ENCODE measurements at regions of chr17 and their contacts with region 1.

Region 1: GRCh38 chr17:32877164-32877764 is 340 bp upstream of the MYO1D start:
- DNase-seq: peak; percentile 92
- H3K4me3 Mint-ChIP-seq: peak overlapping the region; percentile 54
- H3K27ac Mint-ChIP-seq: peak overlapping the region; percentile 48
- H3K4me1 Mint-ChIP-seq: peaks cover 15% of the 10 kb centered on the region
- H3K27me3 Mint-ChIP-seq: no peaks in the 10 kb centered on the region

Region 2: GRCh38 chr17:32341857-32342602 is 535.2 kb before region 1 on chr17 and contains the start of gene C17orf75:
- CTCF ChIA-PET with region 1: no interaction called
- intact Hi-C with region 1: loop called (anchors 1 kb)
- DNase-seq: peak; percentile 88
- H3K4me3 Mint-ChIP-seq: peak within 1 kb of the TSS; percentile 86
- H3K27ac Mint-ChIP-seq: peak within 1 kb of the TSS; percentile 90
- H3K4me1 Mint-ChIP-seq: peaks cover 20% of the 10 kb centered on the region
- H3K27me3 Mint-ChIP-seq: no peaks in the 10 kb centered on the region
- total RNA-seq, gene C17orf75: 25.3 to 26.6 TPM

Region 3: DNA sequence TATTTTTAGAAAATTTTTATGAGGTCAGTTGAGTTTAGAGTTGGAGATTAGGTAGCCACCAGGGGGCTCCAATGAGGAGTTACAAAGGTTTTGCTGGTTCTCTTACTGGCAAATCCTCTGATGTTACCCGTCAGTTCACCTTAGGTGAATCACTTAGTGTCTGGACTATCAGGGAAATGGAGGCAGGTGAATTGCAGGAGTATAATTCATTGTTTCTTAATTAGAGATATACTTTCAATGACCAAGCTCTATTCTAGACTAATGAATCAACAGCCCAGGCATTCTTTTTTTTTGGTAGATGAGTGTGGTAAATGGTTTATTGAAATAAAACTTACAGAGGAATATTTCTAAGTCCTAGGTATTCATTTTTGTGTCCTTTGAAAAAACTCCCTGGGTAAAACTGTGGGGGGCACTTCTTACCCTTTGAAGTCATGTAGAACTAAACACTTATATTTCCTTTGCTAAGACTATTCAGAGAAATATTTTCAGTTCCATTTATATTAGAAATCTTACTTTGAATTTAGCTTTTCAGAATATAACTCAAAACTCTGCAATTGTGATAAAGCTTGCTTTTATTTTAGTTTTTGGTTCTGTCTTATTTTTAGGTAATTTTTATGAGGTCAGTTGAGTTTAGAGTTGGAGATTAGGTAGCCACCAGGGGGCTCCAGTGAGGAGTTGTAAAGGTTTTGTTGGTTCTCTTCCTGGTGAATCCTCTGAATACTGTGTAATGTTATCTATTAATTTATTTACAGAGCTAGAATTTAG is 415.2 kb before region 1 on chr17:
- CTCF ChIA-PET with region 1: interaction called, 7 read pairs
- intact Hi-C with region 1: loop called (anchors 5 kb)
- DNase-seq: peak; percentile 83
- H3K4me3 Mint-ChIP-seq: no peak overlapping the region
- H3K27ac Mint-ChIP-seq: peak overlapping the region; percentile 72
- H3K4me1 Mint-ChIP-seq: peaks cover 37% of the 10 kb centered on the region
- H3K27me3 Mint-ChIP-seq: no peaks in the 10 kb centered on the region

Region 4: DNA sequence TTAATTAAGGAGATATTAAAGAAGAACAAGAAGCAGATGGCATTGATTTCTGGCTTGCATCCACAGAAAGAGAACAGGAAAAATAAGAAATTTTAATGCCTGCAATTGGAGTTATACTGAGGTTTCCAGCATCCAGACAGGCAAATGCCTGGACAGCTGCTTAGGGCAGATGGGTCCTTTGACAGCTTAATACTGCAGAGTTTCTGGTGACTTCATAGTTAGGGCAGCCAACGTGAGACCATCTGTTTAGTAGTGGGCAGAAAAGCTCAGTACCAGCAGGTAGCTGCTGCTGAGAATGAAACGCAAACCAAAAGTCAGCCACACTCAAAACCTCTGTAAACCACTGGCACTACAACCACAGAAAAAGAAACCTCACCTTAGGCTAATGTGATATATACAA is 280.6 kb before region 1 on chr17:
- CTCF ChIA-PET with region 1: no interaction called
- intact Hi-C with region 1: no loop called
- DNase-seq: peak; percentile 14
- H3K4me3 Mint-ChIP-seq: no peak overlapping the region
- H3K27ac Mint-ChIP-seq: no peak overlapping the region
- H3K4me1 Mint-ChIP-seq: peaks cover 11% of the 10 kb centered on the region
- H3K27me3 Mint-ChIP-seq: no peaks in the 10 kb centered on the region

Region 5: DNA sequence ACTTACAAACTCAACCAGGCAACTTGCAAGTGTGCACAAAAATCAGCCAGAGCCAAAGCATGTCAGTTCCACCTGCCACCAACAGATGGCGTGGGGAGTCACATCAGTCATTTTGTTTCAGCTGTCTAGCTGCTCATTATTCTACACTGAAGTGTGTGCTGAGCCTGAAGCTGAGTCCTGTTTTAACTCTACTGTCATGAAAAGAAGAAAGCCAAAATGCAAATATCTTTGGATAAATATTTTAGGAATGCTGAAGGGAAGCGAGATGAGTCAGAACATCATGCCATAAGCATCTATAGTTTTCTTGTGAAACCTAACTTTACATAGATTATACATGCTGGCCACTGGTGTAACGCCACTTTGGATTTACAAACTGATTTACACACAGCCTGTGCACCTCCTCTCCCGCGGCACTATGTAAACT is 217.8 kb before region 1 on chr17:
- CTCF ChIA-PET with region 1: interaction called, 9 read pairs
- intact Hi-C with region 1: loop called (anchors 1 kb)
- DNase-seq: peak; percentile 86
- H3K4me3 Mint-ChIP-seq: no peak overlapping the region
- H3K27ac Mint-ChIP-seq: no peak overlapping the region
- H3K4me1 Mint-ChIP-seq: no peaks in the 10 kb centered on the region
- H3K27me3 Mint-ChIP-seq: no peaks in the 10 kb centered on the region

Region 6: GRCh38 chr17:32828822-32829221 is 48.4 kb before region 1 on chr17:
- CTCF ChIA-PET with region 1: interaction called, 6 read pairs
- intact Hi-C with region 1: loop called (anchors 5 kb)
- DNase-seq: no peak
- H3K4me3 Mint-ChIP-seq: no peak overlapping the region
- H3K27ac Mint-ChIP-seq: no peak overlapping the region
- H3K4me1 Mint-ChIP-seq: peaks cover 15% of the 10 kb centered on the region
- H3K27me3 Mint-ChIP-seq: peaks cover 19% of the 10 kb centered on the region

Region 7: DNA sequence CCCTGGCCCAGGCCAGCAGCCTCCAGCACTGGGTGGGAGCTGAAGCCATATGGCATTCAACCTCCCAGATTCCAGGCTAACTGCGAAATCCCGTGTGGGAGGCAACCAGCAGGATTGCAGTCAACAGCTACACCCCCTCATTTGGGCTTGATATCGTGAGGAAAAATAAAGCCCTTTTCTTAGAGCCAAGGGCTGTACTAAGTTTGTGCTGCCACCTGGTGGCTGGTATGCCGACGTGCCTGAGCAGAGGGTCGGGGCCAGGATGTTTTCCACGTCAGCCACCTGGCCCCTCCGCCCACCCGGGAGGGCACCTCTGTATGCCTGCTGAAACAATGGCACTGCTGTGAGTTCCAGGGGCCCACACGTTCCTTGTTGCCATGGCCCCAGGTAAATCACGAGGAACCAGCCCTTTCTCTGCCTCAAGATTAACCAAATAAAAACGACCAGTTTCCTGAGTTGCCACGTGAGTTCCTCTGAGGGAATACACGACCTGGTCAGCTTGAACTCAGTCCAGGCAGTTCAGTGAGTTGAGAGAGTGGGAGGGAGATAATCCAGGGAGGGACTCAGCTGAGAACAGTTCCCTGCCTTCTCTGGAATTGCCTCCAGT is 59.7 kb after region 1 on chr17:
- CTCF ChIA-PET with region 1: interaction called, 23 read pairs
- intact Hi-C with region 1: loop called (anchors 1 kb)
- DNase-seq: peak; percentile 76
- H3K4me3 Mint-ChIP-seq: no peak overlapping the region
- H3K27ac Mint-ChIP-seq: no peak overlapping the region
- H3K4me1 Mint-ChIP-seq: no peaks in the 10 kb centered on the region
- H3K27me3 Mint-ChIP-seq: peaks cover 16% of the 10 kb centered on the region

Measured in activated naive CD4-positive, alpha-beta T cell treated with anti-CD3 and anti-CD28 coated beads for 36 hours (primary cell).